Prostate gland (tissue), 2 donors: ENCODE measurements at regions of chr4 and their contacts with region 1.

Region 1: GRCh38 chr4:18593445-18594002 is 572.0 kb upstream of the LCORL start:
- DNase-seq: peak; percentile 60
- H3K4me3 ChIP-seq: peak overlapping the region in 1 of 2 donors; percentile 8
- H3K27ac ChIP-seq: peak overlapping the region; percentile 45 to 49
- H3K4me1 ChIP-seq: no peaks in the 10 kb centered on the region
- H3K27me3 ChIP-seq: no peaks in the 10 kb centered on the region
- CTCF ChIP-seq: peak; percentile 27 to 86 (median 72)
- POLR2A ChIP-seq: no peak

Region 2: GRCh38 chr4:17817020-17817419 is 776.5 kb before region 1 on chr4:
- intact Hi-C with region 1: loop called (anchors 5 kb)
- DNase-seq: no peak
- H3K4me3 ChIP-seq: no peak overlapping the region
- H3K27ac ChIP-seq: no peak overlapping the region
- H3K4me1 ChIP-seq: no peaks in the 10 kb centered on the region
- H3K27me3 ChIP-seq: no peaks in the 10 kb centered on the region
- CTCF ChIP-seq: peak in 3 of 4 experiments; percentile 44 to 73 (median 67)
- POLR2A ChIP-seq: no peak